ENCODE measurements at regions of chr3 and their contacts with region 1.

Region 1: GRCh38 chr3:156605686-156606605 is 51.0 kb upstream of the SSR3 start:
- DNase-seq: no peak
- H3K4me3 Mint-ChIP-seq: peak overlapping the region; percentile 73
- H3K27ac Mint-ChIP-seq: no peak overlapping the region
- H3K4me1 Mint-ChIP-seq: peaks cover 41% of the 10 kb centered on the region
- H3K27me3 Mint-ChIP-seq: peaks cover 7% of the 10 kb centered on the region

Region 2: GRCh38 chr3:156643729-156644389 is 37.9 kb after region 1 on chr3:
- intact Hi-C with region 1: loop called (anchors 2 kb)
- DNase-seq: peak; percentile 56
- H3K4me3 Mint-ChIP-seq: peak overlapping the region; percentile 50
- H3K27ac Mint-ChIP-seq: peak overlapping the region; percentile 78
- H3K4me1 Mint-ChIP-seq: peaks cover 29% of the 10 kb centered on the region
- H3K27me3 Mint-ChIP-seq: peaks cover 3% of the 10 kb centered on the region

Region 3: GRCh38 chr3:157136647-157137387 is 530.9 kb after region 1 on chr3:
- intact Hi-C with region 1: loop called (anchors 5 kb)
- DNase-seq: no peak
- H3K4me3 Mint-ChIP-seq: no peak overlapping the region
- H3K27ac Mint-ChIP-seq: peak overlapping the region; percentile 24
- H3K4me1 Mint-ChIP-seq: peaks cover 54% of the 10 kb centered on the region
- H3K27me3 Mint-ChIP-seq: no peaks in the 10 kb centered on the region